Activated B cell treated with CpG ODN at 0.5 μM for 24 hours (primary cell): ENCODE measurements at regions of chr7 and their contacts with region 1.

Region 1: GRCh38 chr7:151381348-151382078 is 28.3 kb downstream of the WDR86 start:
- DNase-seq: peak; percentile 57
- ATAC-seq: peak; percentile 78
- H3K4me3 Mint-ChIP-seq: peak overlapping the region; percentile 83
- H3K27ac Mint-ChIP-seq: peak overlapping the region; percentile 61
- H3K4me1 Mint-ChIP-seq: peaks cover 26% of the 10 kb centered on the region
- H3K27me3 Mint-ChIP-seq: peaks cover 2% of the 10 kb centered on the region
- CTCF ChIP-seq: no peak

Region 2: DNA sequence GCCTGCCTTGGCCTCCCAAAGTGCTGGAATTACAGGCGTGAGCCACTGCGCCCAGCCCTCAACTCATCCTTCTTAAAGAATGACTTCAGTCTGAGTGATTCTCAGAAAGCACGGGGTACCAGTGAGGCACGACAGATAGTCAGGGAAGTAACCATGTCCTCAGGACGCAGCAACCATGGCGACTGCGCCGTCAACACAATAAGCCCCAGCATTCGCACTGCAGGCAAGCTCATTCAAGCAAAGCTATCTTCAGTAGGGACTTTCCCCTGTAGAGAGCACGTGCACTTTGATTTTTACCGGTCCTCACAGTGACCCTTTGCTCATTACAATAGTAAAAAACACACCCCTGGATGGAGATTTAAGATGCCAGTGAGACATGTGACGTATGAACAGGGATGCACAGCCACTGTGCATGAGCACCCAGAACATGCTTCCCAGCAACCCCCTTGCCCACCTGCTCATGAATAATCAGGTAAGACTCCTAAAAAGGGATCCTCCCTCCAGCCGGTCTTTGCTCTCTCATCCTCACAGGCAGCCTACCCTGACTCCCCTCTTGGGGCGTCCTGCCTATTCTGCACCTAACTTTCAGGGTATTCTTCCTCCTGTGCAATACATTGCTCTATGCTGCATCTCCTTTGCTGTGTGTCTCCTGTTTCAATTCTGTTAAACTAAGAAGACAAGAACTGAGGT is 19.3 kb after region 1 on chr7:
- CTCF ChIA-PET with region 1: no interaction called
- POLR2A ChIA-PET with region 1: interaction called, 3 read pairs
- intact Hi-C with region 1: loop called (anchors 1 kb)
- DNase-seq: peak; percentile 55
- ATAC-seq: peak; percentile 96
- H3K4me3 Mint-ChIP-seq: peak overlapping the region; percentile 36
- H3K27ac Mint-ChIP-seq: peak overlapping the region; percentile 81
- H3K4me1 Mint-ChIP-seq: peaks cover 26% of the 10 kb centered on the region
- H3K27me3 Mint-ChIP-seq: no peaks in the 10 kb centered on the region
- CTCF ChIP-seq: no peak

Region 3: GRCh38 chr7:151626422-151627115 is 245.1 kb after region 1 on chr7:
- CTCF ChIA-PET with region 1: no interaction called
- POLR2A ChIA-PET with region 1: no interaction called
- intact Hi-C with region 1: no loop called
- DNase-seq: no peak
- ATAC-seq: peak; percentile 50
- H3K4me3 Mint-ChIP-seq: no peak overlapping the region
- H3K27ac Mint-ChIP-seq: no peak overlapping the region
- H3K4me1 Mint-ChIP-seq: peaks cover 11% of the 10 kb centered on the region
- H3K27me3 Mint-ChIP-seq: no peaks in the 10 kb centered on the region
- CTCF ChIP-seq: no peak